ENCODE measurements at regions of chr5 and their contacts with region 1.

Region 1: DNA sequence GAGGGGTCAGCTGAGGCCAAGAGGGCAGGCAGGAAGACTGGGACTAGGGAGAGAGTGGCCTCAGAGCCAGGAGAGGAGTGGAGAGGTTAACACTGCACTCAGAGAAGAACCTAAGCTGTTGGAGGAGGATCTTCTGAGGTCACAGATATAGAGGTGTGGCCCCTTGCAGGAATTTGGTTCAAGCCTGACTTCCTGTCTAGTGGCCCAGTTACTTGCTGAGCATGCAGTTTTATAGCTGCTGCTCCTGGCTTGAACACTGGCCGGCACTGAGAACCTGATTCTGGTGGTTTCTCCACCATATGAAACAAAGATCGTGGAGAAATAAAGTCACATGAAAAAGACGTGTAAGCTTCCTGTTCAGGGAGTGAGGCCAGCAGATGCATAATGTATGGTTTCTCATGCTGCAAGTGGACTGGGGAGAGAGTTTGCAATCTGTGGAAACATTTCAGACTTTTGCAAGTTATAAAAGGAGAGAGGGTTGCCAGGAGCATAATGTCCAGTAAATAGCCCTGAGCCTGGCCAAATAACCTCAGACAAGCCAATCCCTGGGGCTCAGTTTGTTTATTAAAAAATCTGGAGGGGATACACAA is 82.6 kb downstream of the GALNT10 start:
- DNase-seq: peak; percentile 34 to 56 (median 48)
- H3K4me3 ChIP-seq: no peak overlapping the region
- H3K27ac ChIP-seq: peak overlapping the region in 1 of 2 donors; percentile 66
- H3K4me1 ChIP-seq: peaks cover 33% of the 10 kb centered on the region
- H3K27me3 ChIP-seq: no peaks in the 10 kb centered on the region
- CTCF ChIP-seq: no peak
- EP300 ChIP-seq: no peak
- POLR2A ChIP-seq: no peak

Region 2: DNA sequence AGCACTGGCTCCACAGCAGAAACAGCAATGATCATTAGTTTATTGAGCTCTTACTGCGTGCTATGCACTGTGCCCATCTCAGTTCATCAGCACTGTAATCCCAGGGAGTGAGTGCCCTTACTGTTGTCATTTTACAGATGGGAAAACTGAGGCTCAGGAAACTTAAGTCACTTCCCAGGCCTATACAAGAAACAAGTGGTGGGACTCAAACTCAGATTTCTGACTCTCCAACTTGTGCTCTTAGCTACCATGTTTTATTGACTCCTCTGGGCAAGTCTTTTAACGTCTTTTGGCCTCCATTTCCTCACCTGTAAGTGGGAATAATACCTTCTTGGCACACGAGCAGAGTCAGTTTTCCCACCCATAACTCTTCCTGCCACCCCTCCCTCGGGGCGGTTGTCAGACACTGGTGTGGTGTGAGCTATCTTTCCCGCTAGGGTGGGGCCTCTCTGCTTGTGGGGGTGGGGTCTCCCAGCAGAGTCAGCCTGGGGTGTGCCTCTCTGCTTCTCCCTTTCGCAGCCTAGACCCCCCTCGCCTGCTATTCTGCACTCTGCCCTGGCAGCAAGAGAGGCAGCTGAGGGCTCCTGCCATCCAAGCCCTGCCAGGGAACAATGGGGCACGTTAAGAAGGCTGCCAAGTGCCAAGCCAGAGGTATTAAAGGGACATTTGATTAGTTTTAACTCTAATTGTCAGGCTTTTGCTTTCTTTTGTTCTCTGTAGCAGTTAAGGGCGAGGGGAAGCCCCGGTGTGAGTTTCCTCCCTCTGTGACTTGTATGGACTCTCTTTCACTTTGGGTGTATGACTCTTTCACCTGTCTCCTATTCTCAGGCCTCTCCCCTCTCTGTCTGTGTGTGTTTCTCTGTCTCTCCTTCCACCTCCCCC is 70.5 kb before region 1 on chr5:
- intact Hi-C with region 1: loop called in 2 of 4 experiments (anchors 10 kb)
- DNase-seq: no peak
- H3K4me3 ChIP-seq: no peak overlapping the region
- H3K27ac ChIP-seq: no peak overlapping the region
- H3K4me1 ChIP-seq: peaks cover 7% of the 10 kb centered on the region
- H3K27me3 ChIP-seq: no peaks in the 10 kb centered on the region
- CTCF ChIP-seq: no peak
- EP300 ChIP-seq: no peak
- POLR2A ChIP-seq: no peak

Region 3: GRCh38 chr5:154395407-154396258 is 122.5 kb after region 1 on chr5:
- intact Hi-C with region 1: loop called in 1 of 4 experiments (anchors 10 kb)
- DNase-seq: no peak
- H3K4me3 ChIP-seq: no peak overlapping the region
- H3K27ac ChIP-seq: no peak overlapping the region
- H3K4me1 ChIP-seq: peaks cover 5% of the 10 kb centered on the region
- H3K27me3 ChIP-seq: no peaks in the 10 kb centered on the region
- CTCF ChIP-seq: no peak
- EP300 ChIP-seq: no peak
- POLR2A ChIP-seq: no peak